HCT116 (cell line): ENCODE measurements at regions of chr18 and their contacts with region 1.

Region 1: GRCh38 chr18:50507120-50507590 is 52.7 kb upstream of the MAPK4 start:
- DNase-seq: no peak
- ATAC-seq: peak; percentile 97
- H3K4me3 ChIP-seq: no peak overlapping the region
- H3K27ac ChIP-seq: no peak overlapping the region
- H3K4me1 ChIP-seq: no peaks in the 10 kb centered on the region
- H3K27me3 ChIP-seq: no peaks in the 10 kb centered on the region
- CTCF ChIP-seq: peak; percentile 70 to 85 (median 79)
- POLR2A ChIP-seq: no peak
- RAD21 ChIP-seq: peak; percentile 86

Region 2: DNA sequence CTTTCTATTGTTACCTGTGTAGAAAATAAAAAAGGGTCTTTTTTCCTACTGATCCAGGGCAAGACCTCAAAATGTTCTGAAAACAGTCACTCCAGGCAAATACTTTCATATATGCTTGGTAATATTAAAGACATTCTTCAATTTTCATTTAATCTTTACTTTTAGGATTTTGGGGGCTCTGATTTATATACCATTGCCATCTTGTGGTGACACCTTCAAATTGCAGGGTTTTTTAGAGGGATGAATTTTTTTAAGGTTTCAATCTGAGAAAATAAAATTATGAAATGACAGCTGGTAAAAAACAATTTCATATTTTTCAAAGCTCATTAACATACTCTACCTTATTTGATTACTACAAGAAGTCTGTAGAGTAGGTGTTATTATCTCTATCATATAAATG is 79.6 kb after region 1 on chr18:
- CTCF ChIA-PET with region 1: no interaction called
- POLR2A ChIA-PET with region 1: no interaction called
- RAD21 ChIA-PET with region 1: no interaction called
- intact Hi-C with region 1: loop called (anchors 1 kb)
- DNase-seq: no peak
- ATAC-seq: no peak
- H3K4me3 ChIP-seq: no peak overlapping the region
- H3K27ac ChIP-seq: no peak overlapping the region
- H3K4me1 ChIP-seq: no peaks in the 10 kb centered on the region
- H3K27me3 ChIP-seq: peaks cover 16% of the 10 kb centered on the region; the same call in 1 of the 2 replicates
- CTCF ChIP-seq: peak; percentile 25 to 61 (median 33); a peak in 4 of 6 replicates
- POLR2A ChIP-seq: no peak
- RAD21 ChIP-seq: peak; percentile 56; the same call in 1 of the 2 replicates

Region 3: GRCh38 chr18:50644810-50645209 is 137.7 kb after region 1 on chr18:
- CTCF ChIA-PET with region 1: interaction called, 4 read pairs
- POLR2A ChIA-PET with region 1: no interaction called
- RAD21 ChIA-PET with region 1: no interaction called
- intact Hi-C with region 1: loop called (anchors 1 kb)
- DNase-seq: peak; percentile 23
- ATAC-seq: peak; percentile 100
- H3K4me3 ChIP-seq: no peak overlapping the region
- H3K27ac ChIP-seq: no peak overlapping the region
- H3K4me1 ChIP-seq: no peaks in the 10 kb centered on the region
- H3K27me3 ChIP-seq: 0 out of 2 replicates have a peak, but pooled peaks cover 6% of the 10 kb centered on the region
- CTCF ChIP-seq: peak; percentile 18 to 73 (median 70); a peak in 4 of 6 replicates
- POLR2A ChIP-seq: no peak
- RAD21 ChIP-seq: peak; percentile 50

Region 4: DNA sequence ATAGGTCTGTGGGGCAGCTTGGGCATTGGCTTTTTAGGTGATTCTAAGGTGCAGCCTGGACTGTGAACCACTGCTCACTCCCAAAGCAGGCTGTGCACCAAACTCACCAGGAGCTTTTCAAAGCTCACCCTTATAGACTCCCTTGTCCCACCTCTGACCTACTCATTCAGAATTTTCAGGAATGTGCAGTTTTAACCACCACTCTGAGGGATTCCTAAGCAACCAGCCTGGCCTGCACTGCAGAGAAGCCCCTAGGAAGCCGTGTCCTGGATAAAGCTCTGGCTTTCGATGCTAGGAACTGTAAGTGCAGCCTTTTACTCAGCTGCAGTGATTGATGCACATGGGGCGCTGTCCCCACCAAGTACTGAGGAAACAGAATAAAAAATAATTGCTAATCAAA is 279.7 kb after region 1 on chr18:
- CTCF ChIA-PET with region 1: interaction called, 3 read pairs
- POLR2A ChIA-PET with region 1: no interaction called
- RAD21 ChIA-PET with region 1: no interaction called
- intact Hi-C with region 1: loop called (anchors 1 kb)
- DNase-seq: no peak
- ATAC-seq: no peak
- H3K4me3 ChIP-seq: no peak overlapping the region
- H3K27ac ChIP-seq: no peak overlapping the region
- H3K4me1 ChIP-seq: no peaks in the 10 kb centered on the region
- H3K27me3 ChIP-seq: no peaks in the 10 kb centered on the region
- CTCF ChIP-seq: no peak
- POLR2A ChIP-seq: no peak
- RAD21 ChIP-seq: no peak

Region 5: DNA sequence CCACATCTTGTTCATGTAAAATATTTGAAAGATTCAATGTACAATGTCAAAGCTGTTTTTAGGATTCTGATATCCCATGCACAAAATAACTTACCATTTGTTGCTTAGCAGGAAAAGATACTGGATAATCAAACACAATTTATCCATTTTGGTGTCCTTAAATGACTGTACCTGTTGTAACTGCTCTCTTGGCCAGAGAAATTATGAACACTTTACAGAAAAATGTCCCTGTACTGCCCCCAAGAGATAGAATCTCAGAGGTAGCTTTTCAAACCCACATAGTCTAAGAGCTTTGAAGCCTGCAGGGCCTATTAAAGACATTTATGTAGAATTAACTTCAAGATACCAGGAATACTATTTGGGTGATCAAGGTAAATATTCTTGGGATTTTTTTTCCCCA is 359.6 kb after region 1 on chr18:
- CTCF ChIA-PET with region 1: no interaction called
- POLR2A ChIA-PET with region 1: no interaction called
- RAD21 ChIA-PET with region 1: no interaction called
- intact Hi-C with region 1: loop called (anchors 5 kb)
- DNase-seq: no peak
- ATAC-seq: peak; percentile 45; the same call in 1 of the 2 replicates
- H3K4me3 ChIP-seq: no peak overlapping the region
- H3K27ac ChIP-seq: no peak overlapping the region
- H3K4me1 ChIP-seq: peaks cover 25 to 39% of the 10 kb centered on the region in 2 experiments
- H3K27me3 ChIP-seq: no peaks in the 10 kb centered on the region
- CTCF ChIP-seq: peak; percentile 17 to 40 (median 35); a peak in 3 of 6 replicates
- POLR2A ChIP-seq: no peak
- RAD21 ChIP-seq: peak; percentile 59

Region 6: DNA sequence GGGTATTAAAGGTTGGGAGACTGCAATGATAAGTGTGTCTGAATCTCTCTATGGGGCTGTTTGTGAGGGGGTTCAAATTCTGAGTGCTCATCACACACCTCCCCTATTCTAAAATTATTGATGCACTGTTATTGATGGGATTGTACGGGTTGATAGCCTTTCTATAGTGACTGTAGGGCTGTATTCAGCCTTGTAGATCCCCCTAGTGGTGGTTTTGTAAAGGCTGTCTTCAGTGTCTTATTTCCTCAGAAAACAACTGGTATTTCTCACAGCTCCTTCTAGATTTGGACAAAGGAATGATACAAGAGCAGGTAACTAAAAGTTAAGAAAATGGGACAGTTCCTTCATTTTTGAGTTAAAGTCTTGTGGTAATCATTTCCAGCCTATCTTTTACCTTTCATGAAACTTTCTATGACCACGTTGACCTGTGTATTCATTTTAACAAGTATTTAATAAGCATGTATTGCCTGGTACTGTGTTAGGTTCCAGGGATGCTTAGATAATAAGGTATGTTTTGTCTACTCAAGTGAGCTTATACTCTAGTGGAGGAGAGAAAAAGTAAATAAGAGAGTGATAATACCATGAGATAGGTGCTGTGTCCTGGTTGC is 544.1 kb after region 1 on chr18:
- CTCF ChIA-PET with region 1: no interaction called
- POLR2A ChIA-PET with region 1: no interaction called
- RAD21 ChIA-PET with region 1: no interaction called
- intact Hi-C with region 1: loop called (anchors 10 kb)
- DNase-seq: peak; percentile 38
- ATAC-seq: peak; percentile 98
- H3K4me3 ChIP-seq: no peak overlapping the region
- H3K27ac ChIP-seq: no peak overlapping the region
- H3K4me1 ChIP-seq: no peaks in the 10 kb centered on the region
- H3K27me3 ChIP-seq: no peaks in the 10 kb centered on the region
- CTCF ChIP-seq: peak; percentile 57 to 88 (median 78); a peak in 5 of 6 replicates
- POLR2A ChIP-seq: no peak
- RAD21 ChIP-seq: peak; percentile 66